ENCODE measurements at regions of chr1 and their contacts with region 1.

Region 1: DNA sequence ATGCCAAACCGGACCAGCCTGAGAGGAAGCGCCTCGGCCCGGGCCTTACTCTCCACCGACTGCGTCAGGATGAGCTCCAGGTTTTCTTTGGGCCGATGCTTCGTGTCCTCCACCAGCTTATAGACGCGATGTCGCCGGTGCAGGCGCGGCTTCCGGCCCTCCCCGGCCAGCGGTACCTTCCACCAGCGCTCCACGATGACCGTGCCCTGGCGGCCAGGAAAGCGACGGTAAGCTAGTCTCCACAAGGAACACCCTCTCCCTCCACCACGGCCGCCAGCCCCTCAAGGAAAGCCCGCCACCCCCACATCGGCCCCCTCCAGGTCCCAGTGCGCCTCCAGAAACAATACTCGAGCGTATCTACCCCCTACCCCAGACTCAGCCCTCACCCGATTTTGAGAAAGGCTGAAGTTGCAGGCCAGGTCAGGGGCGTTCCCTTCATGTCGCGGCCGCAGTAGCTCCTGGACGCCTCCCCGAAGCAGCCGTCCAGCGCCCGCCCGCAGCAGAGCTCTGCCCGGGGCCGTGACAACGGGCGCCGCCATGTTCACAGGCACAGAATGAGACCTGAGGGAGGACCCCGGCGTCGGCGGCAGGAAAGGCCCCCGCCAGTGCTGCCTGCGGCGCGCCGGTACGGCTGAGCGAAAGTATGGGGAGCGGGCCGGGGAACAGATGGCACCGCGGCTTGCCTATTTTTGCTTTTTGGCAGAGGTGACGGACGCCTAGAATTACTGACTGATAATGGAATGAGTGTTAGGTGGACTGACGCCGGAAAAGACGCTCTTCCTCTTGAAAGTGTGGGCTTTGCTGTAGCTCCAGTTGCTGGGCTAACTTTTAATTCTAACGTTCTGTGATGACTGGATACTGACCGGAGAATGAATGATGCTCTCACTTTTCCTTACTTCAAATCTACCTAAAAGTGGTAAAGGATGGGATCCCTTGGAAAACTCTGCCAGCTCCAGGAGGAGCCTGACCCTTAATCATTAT is at the start of gene MRPL9:
- DNase-seq: peak; percentile 84
- H3K4me3 Mint-ChIP-seq: peak within 1 kb of the TSS; percentile 92
- H3K27ac Mint-ChIP-seq: peak within 1 kb of the TSS; percentile 97
- H3K4me1 Mint-ChIP-seq: peaks cover 17% of the 10 kb centered on the region
- H3K27me3 Mint-ChIP-seq: no peaks in the 10 kb centered on the region
- CTCF ChIP-seq: no peak
- total RNA-seq, gene MRPL9: 145 and 146 TPM in 2 replicates

Region 2: DNA sequence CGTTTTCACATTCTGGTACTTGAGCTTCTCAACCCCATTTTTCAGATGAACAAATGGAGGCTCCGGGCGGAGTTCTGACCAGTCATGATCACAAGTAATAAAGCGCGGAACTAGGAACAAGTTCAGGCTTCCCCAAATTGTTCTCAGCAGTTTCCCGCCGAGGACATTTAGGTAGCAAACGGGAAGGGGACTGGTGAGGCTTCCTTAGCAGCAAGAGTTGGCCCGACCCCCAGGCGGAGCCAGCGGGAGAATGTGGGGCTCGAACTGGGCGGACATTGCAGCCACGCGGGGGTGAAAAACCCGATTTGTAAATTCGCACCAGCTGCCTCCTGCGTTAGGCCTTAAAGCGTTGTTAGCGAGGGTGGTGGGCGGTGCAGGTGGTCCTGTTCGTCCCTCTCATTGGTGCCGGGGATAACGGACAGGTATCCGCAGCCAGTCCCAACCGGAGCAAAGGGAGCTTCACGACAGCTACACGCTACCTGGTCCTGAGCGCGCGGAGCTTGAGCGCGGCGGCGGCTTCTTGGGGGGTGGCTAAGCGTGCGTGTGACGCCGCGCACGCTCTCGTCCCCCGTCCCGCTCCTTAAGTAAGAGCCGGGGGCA is 632.1 kb before region 1 on chr1:
- CTCF ChIA-PET with region 1: no interaction called
- POLR2A ChIA-PET with region 1: no interaction called
- intact Hi-C with region 1: no loop called
- DNase-seq: no peak
- H3K4me3 Mint-ChIP-seq: no peak overlapping the region
- H3K27ac Mint-ChIP-seq: no peak overlapping the region
- H3K4me1 Mint-ChIP-seq: no peaks in the 10 kb centered on the region
- H3K27me3 Mint-ChIP-seq: no peaks in the 10 kb centered on the region
- CTCF ChIP-seq: no peak

Region 3: DNA sequence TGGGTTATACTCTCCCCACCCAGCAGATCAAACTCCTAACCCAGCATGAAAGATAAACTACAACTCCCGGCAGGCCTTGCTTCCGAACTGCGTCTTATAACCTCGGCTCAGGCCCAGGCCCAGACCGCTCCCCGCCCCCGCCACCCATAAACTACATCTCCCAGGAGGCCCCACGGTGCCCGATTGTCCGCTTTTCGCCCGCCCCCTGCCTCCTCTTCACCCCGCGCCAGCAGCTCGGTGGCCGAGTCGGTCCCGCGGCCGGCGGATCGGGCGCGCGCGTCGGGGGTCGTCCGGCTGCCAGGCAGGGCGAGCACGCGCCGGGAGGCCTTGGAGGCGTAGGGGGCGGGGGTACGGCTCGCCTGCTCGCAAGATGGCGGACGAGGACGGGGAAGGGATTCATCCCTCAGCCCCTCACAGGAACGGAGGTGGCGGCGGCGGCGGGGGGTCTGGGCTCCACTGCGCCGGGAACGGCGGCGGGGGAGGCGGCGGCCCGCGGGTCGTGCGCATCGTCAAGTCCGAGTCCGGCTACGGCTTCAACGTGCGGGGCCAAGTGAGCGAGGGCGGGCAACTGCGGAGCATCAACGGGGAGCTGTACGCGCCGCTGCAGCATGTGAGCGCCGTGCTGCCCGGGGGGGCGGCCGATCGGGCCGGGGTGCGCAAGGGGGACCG is 151.3 kb before region 1 on chr1 and contains the start of gene SNX27:
- CTCF ChIA-PET with region 1: no interaction called
- POLR2A ChIA-PET with region 1: interaction called, 17 read pairs
- intact Hi-C with region 1: no loop called
- DNase-seq: peak; percentile 96
- H3K4me3 Mint-ChIP-seq: peak within 1 kb of the TSS; percentile 89
- H3K27ac Mint-ChIP-seq: peak within 1 kb of the TSS; percentile 88
- H3K4me1 Mint-ChIP-seq: peaks cover 60% of the 10 kb centered on the region
- H3K27me3 Mint-ChIP-seq: no peaks in the 10 kb centered on the region
- CTCF ChIP-seq: no peak
- total RNA-seq, gene SNX27: 36.9 and 43.1 TPM in 2 replicates

Region 4: GRCh38 chr1:151753160-151753559 is 10.1 kb before region 1 on chr1:
- CTCF ChIA-PET with region 1: interaction called, 3 read pairs
- POLR2A ChIA-PET with region 1: interaction called, 10 read pairs
- intact Hi-C with region 1: no loop called
- DNase-seq: no peak
- H3K4me3 Mint-ChIP-seq: no peak overlapping the region
- H3K27ac Mint-ChIP-seq: no peak overlapping the region
- H3K4me1 Mint-ChIP-seq: peaks cover 14% of the 10 kb centered on the region
- H3K27me3 Mint-ChIP-seq: peaks cover 14% of the 10 kb centered on the region
- CTCF ChIP-seq: no peak

Region 5: DNA sequence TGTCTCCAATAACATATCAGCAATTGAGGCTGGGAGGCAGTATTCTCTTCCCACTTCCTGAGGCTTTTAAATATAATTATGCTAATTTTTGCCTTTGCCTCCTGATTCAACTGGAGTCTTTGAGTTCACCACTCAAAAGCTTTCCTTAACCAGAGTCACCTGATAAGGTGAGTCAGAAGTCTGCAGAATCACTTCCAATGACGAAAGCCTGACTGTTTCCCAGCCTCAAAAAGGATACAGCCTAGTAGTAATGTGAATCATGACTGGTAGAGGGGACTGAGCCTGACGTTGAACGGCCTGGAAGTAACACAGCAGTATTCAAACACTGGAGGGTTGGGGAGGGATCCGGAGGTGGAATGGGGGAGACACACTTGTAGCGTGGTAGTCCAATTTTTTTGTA is 10.5 kb after region 1 on chr1:
- CTCF ChIA-PET with region 1: no interaction called
- POLR2A ChIA-PET with region 1: interaction called, 56 read pairs
- intact Hi-C with region 1: no loop called
- DNase-seq: peak; percentile 83
- H3K4me3 Mint-ChIP-seq: no peak overlapping the region
- H3K27ac Mint-ChIP-seq: peak overlapping the region; percentile 2
- H3K4me1 Mint-ChIP-seq: peaks cover 6% of the 10 kb centered on the region
- H3K27me3 Mint-ChIP-seq: no peaks in the 10 kb centered on the region
- CTCF ChIP-seq: no peak

Region 6: GRCh38 chr1:151779852-151780251 is 16.6 kb after region 1 on chr1:
- CTCF ChIA-PET with region 1: no interaction called
- POLR2A ChIA-PET with region 1: interaction called, 56 read pairs
- intact Hi-C with region 1: no loop called
- DNase-seq: no peak
- H3K4me3 Mint-ChIP-seq: no peak overlapping the region
- H3K27ac Mint-ChIP-seq: peak overlapping the region; percentile 16
- H3K4me1 Mint-ChIP-seq: no peaks in the 10 kb centered on the region
- H3K27me3 Mint-ChIP-seq: no peaks in the 10 kb centered on the region
- CTCF ChIP-seq: no peak

Region 7: GRCh38 chr1:151790071-151790940 is 27.1 kb after region 1 on chr1 and contains the start of gene TDRKH:
- CTCF ChIA-PET with region 1: no interaction called
- POLR2A ChIA-PET with region 1: interaction called, 17 read pairs
- intact Hi-C with region 1: loop called (anchors 1 kb)
- DNase-seq: peak; percentile 100
- H3K4me3 Mint-ChIP-seq: peak within 1 kb of the TSS; percentile 83
- H3K27ac Mint-ChIP-seq: peak within 1 kb of the TSS; percentile 47
- H3K4me1 Mint-ChIP-seq: peaks cover 9% of the 10 kb centered on the region
- H3K27me3 Mint-ChIP-seq: no peaks in the 10 kb centered on the region
- CTCF ChIP-seq: peak; percentile 26
- total RNA-seq, gene TDRKH: 5.6 and 10.6 TPM in 2 replicates

Region 8: DNA sequence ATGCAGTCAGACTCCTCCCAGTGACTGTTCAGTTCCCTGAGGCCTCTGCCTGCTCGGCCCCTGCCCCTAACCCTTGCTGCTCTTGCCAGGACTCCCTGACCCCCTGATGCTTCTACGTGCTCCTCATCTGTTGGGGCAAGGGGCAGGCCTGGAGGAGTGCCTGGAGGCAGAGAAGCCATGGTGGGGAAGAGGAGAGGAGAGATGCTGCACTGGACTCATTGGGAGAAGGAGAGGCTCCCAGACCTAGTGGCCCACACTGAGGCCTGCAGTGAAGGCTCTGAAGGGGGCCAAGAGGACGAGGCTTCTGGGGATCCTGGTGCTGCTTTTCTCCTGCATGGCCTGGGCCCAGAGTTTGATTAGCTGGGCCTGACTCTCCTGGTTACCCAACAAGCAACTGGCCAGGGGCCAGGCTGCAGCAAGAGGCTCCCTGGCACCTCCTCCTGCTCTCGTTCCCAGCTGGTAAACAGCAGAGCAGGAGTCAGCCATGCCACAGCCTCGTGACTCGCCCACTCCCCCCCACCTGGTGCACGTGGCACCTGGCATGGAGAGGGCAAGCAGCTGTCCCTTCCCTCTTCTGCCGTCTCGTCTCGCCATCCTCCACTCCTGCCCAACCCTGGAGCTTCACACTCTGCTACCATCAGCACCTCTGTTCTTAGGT is 69.2 kb after region 1 on chr1:
- CTCF ChIA-PET with region 1: interaction called, 16 read pairs
- POLR2A ChIA-PET with region 1: interaction called, 8 read pairs
- intact Hi-C with region 1: loop called (anchors 1 kb)
- DNase-seq: peak; percentile 95
- H3K4me3 Mint-ChIP-seq: peak overlapping the region; percentile 56
- H3K27ac Mint-ChIP-seq: peak overlapping the region; percentile 60
- H3K4me1 Mint-ChIP-seq: peaks cover 67% of the 10 kb centered on the region
- H3K27me3 Mint-ChIP-seq: no peaks in the 10 kb centered on the region
- CTCF ChIP-seq: no peak

Region 9: DNA sequence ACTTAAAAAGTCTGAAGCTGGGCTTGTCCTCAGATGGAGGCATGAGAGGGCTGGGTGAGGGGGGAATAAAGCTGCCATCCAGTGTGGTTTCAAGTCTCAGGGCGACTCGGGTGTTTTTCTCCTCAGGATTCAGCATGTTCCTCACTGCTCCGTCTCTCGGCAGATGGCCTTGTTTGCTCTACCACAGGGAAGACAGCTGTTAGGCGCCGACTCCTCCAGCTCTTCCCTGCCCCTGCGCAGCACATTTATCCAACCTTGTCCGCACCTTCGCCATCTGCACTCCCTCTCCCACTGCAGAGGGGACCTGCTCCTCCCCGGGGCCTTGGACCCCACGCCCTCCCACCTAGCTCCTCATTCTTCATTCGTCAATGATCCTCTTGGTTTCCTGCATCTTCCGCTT is 290.1 kb after region 1 on chr1:
- CTCF ChIA-PET with region 1: no interaction called
- POLR2A ChIA-PET with region 1: no interaction called
- intact Hi-C with region 1: no loop called
- DNase-seq: no peak
- H3K4me3 Mint-ChIP-seq: no peak overlapping the region
- H3K27ac Mint-ChIP-seq: no peak overlapping the region
- H3K4me1 Mint-ChIP-seq: peaks cover 40% of the 10 kb centered on the region
- H3K27me3 Mint-ChIP-seq: no peaks in the 10 kb centered on the region
- CTCF ChIP-seq: no peak